GM12878 (cell line): ENCODE measurements at regions of chr19 and their contacts with region 1.

Region 1: GRCh38 chr19:12757544-12758274 is 6.1 kb downstream of the BEST2 start:
- DNase-seq: no peak
- ATAC-seq: peak; percentile 93
- H3K4me3 ChIP-seq: peak overlapping the region; percentile 32; the same call in 1 of the 2 replicates
- H3K27ac ChIP-seq: no peak overlapping the region
- H3K4me1 ChIP-seq: no peaks in the 10 kb centered on the region
- H3K27me3 ChIP-seq: peaks cover 0 to 2% of the 10 kb centered on the region in 2 experiments; a peak in 1 of 4 replicates
- CTCF ChIP-seq: peak; percentile 82 to 91 (median 89)
- EP300 ChIP-seq: no peak
- POLR2A ChIP-seq: no peak
- RAD21 ChIP-seq: peak; percentile 49

Region 2: DNA sequence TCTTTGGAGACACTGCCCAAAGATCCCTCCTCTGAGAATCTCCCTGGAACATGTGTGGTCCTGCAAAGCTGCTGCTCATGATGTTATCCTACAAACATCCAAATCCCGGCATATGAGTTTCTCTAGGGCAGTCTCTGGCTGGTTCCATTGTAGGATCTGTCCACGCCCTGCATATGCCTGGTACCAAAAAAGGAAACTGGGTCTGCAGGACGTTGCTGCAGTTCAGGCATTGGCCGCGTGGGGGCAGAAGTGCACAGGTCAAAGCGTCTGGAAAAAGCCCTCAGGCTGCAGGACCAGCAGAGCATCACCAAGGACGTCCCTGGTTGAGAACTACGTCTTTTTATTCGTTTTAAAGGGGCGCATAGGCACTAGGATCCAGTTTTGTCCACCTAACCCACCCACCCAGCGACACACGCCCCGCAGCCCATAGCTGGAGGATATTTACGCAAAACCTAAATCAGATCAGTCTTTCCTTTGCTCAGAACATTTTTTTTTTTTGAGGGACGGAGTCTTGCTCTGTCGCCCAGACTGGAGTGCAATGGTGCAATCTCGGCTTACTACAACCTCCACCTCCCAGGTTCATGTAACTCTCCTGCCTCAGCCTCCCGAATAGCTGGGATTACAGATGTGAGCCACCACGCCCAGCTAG is 193.6 kb before region 1 on chr19:
- CTCF ChIA-PET with region 1: interaction called, 4 read pairs
- POLR2A ChIA-PET with region 1: no interaction called
- RAD21 ChIA-PET with region 1: no interaction called
- SMC1A ChIA-PET with region 1: no interaction called
- in situ Hi-C with region 1: no loop called
- intact Hi-C with region 1: loop called (anchors 5 kb)
- DNase-seq: peak; percentile 65
- ATAC-seq: peak; percentile 95
- H3K4me3 ChIP-seq: no peak overlapping the region
- H3K27ac ChIP-seq: no peak overlapping the region
- H3K4me1 ChIP-seq: no peaks in the 10 kb centered on the region
- H3K27me3 ChIP-seq: no peaks in the 10 kb centered on the region
- CTCF ChIP-seq: peak; percentile 98 to 99 (median 99)
- EP300 ChIP-seq: no peak
- POLR2A ChIP-seq: no peak
- RAD21 ChIP-seq: peak; percentile 99

Region 3: GRCh38 chr19:12628040-12629022 is 129.4 kb before region 1 on chr19:
- CTCF ChIA-PET with region 1: no interaction called
- POLR2A ChIA-PET with region 1: no interaction called
- RAD21 ChIA-PET with region 1: no interaction called
- SMC1A ChIA-PET with region 1: no interaction called
- in situ Hi-C with region 1: no loop called
- intact Hi-C with region 1: no loop called
- DNase-seq: no peak
- ATAC-seq: no peak
- H3K4me3 ChIP-seq: no peak overlapping the region
- H3K27ac ChIP-seq: no peak overlapping the region
- H3K4me1 ChIP-seq: no peaks in the 10 kb centered on the region
- H3K27me3 ChIP-seq: no peaks in the 10 kb centered on the region
- CTCF ChIP-seq: no peak
- EP300 ChIP-seq: no peak
- POLR2A ChIP-seq: no peak
- RAD21 ChIP-seq: no peak

Region 4: DNA sequence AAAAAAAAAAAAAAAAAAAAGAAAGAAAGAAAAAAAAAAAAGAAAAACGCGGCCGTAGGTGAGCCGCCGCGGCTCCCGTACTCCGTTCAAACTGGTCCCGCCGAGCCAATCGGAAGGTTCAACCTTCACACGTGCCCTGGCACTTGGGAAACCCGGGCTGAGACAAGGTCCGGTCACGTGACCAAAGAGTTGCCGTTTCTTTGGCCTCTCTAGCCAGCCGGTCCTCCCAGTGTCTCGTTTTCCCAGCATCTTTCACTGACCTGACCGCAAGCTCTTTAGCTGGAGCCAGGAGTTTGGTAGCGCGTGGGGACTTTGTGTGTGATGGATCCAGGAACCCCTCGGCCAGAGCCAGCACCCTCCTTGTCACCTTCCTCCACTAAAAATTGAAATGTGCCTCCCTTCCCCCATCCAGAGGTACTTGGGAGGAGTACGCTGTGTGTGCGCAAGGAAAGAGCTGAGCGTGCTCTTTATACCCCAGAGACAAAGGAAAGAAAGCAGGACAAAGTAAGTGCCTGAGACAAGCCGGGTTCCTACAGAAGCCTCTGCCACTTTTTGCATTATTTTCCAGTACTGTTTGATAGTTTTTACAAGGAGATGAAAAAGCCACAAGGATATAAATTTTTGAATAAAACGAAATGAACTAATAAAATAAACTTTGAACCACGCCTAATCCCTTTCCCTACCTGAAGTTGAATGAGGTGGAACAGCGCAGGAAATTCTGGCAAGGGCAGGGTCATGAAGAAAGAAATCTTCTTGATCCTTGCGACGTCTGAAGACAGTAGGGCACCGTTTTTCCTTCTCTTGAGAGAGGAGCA is 34.9 kb before region 1 on chr19:
- CTCF ChIA-PET with region 1: interaction called, 27 read pairs
- POLR2A ChIA-PET with region 1: interaction called, 5 read pairs
- RAD21 ChIA-PET with region 1: interaction called, 7 read pairs
- SMC1A ChIA-PET with region 1: interaction called, 6 read pairs
- in situ Hi-C with region 1: no loop called
- intact Hi-C with region 1: loop called (anchors 1 kb)
- DNase-seq: peak; percentile 81
- ATAC-seq: peak; percentile 87
- H3K4me3 ChIP-seq: peak overlapping the region; percentile 91
- H3K27ac ChIP-seq: peak overlapping the region; percentile 81
- H3K4me1 ChIP-seq: peaks cover 8% of the 10 kb centered on the region; the same call in 1 of the 2 replicates
- H3K27me3 ChIP-seq: no peaks in the 10 kb centered on the region
- CTCF ChIP-seq: no peak
- EP300 ChIP-seq: peak; percentile 4 to 40; a peak in 1 of 4 replicates
- POLR2A ChIP-seq: peak; percentile 51; the same call in 1 of the 2 replicates
- RAD21 ChIP-seq: no peak

Region 5: DNA sequence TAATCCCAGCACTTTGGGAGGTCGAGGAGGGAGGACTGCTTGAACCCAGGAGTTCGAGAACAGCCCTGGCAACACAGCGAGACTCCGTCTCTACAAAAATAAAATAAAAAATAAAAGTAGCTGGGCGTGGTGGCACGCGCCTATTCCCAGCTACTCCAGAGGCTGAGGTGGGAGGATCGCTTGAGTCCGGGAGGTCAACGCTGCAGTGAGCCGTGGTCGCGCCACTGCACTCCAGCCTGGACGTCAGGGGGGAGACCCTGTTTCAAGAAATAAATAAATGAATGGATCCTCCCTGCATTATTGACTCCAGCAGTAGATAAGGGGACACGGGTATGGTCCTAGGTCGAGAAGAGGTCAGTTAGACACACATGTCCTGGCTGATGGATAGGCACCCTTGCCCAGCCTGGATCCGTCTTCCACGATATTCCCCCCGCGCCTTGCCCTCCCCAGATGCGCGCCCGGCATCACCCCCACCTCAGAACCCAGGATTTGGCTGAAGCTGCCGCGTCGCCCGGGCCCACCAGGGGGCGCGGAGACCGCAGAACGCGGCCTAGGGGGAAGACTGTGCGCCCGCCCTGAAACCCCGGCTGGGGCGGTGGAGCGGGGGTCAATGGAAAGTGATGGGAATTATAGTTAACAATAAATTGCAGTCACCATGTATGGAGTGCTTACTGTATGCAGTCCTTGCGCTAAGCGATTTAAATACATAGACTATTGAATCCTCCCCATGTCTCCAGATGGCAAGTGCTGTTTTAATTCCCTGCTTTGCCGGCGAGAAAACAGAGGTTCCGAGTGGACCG is 19.7 kb after region 1 on chr19:
- CTCF ChIA-PET with region 1: interaction called, 45 read pairs
- POLR2A ChIA-PET with region 1: interaction called, 4 read pairs
- RAD21 ChIA-PET with region 1: interaction called, 9 read pairs
- SMC1A ChIA-PET with region 1: no interaction called
- in situ Hi-C with region 1: no loop called
- intact Hi-C with region 1: no loop called
- DNase-seq: no peak
- ATAC-seq: peak; percentile 68
- H3K4me3 ChIP-seq: peak overlapping the region; percentile 76
- H3K27ac ChIP-seq: peak overlapping the region; percentile 91
- H3K4me1 ChIP-seq: peaks cover 30% of the 10 kb centered on the region
- H3K27me3 ChIP-seq: no peaks in the 10 kb centered on the region
- CTCF ChIP-seq: peak; percentile 90 to 98 (median 95)
- EP300 ChIP-seq: no peak
- POLR2A ChIP-seq: no peak
- RAD21 ChIP-seq: peak; percentile 89

Region 6: DNA sequence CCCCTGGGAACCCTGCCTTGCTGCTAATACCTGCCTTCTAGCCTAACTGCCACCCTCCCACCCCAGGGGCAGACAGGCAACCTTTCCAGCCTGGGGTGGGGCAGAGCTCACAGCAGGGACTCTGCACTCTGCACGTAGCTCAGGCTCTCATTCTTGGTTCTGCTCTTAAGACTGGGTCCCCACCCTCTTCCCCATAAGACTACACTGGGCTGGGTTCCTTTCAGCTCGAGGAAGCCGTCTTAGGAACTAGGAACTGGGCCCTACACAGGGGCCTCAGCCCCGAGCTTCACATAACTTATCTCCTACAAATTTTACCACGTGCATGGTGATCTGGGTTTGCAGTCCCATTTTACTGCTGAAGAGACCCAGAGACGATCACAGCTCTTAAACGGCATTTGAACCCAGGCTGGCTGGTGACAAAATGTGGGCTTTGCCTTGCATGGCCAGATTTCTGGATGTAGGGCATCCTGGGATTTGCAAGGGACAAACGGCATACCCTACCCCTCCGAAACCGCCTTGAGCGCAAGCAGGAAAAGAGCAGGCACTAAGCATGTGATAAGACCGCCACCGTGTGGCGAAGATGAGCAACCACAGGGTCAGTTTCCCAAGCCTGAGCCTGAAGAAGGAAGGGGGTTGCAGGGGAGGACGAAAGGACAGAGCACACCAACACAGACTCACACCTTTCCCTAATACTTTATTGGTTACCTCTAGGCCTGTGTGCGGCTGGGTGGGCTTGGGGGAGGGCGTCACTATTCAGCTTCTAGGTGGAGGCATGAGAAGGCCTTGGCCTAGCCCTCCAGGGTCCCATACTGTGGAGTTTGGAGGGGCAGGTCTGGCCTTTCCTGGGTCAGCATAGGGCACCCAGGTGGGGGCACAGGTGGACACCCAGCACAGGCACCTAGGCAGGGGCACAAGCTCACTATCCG is 38.7 kb after region 1 on chr19:
- CTCF ChIA-PET with region 1: interaction called, 426 read pairs
- POLR2A ChIA-PET with region 1: no interaction called
- RAD21 ChIA-PET with region 1: interaction called, 16 read pairs
- SMC1A ChIA-PET with region 1: interaction called, 31 read pairs
- in situ Hi-C with region 1: loop called (anchors 5 kb)
- intact Hi-C with region 1: loop called (anchors 1 kb)
- DNase-seq: no peak
- ATAC-seq: peak; percentile 6; the same call in 2 of the 3 replicates
- H3K4me3 ChIP-seq: peak overlapping the region; percentile 14; the same call in 1 of the 2 replicates
- H3K27ac ChIP-seq: peak overlapping the region; percentile 60
- H3K4me1 ChIP-seq: peaks cover 22% of the 10 kb centered on the region
- H3K27me3 ChIP-seq: no peaks in the 10 kb centered on the region
- CTCF ChIP-seq: peak; percentile 94 to 98 (median 96); a peak in 5 of 6 replicates
- EP300 ChIP-seq: no peak
- POLR2A ChIP-seq: peak; percentile 48
- RAD21 ChIP-seq: peak; percentile 99